ENCODE measurements at regions of chr5 and their contacts with region 1.

Region 1: DNA sequence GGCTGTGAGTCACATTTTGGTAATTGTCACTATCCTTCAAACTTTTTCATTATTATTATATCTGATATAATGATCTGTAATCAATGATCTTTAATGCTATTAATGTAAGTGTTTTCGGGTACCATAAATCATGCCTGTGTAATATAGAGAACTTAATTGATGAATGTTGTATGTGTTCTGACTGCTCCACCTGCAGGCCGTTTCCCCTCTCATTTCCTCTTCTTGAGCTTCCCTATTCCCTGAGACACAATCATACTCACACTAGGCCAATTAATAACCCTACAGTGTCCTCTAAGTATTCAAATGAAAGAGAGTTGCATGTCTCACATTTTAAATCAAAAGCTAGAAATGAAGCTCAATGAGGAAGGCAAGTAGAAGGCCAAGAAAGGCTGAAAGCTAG is 420.9 kb upstream of the SGCD start:
- DNase-seq: peak in 2 of 35 experiments; percentile 4 to 35
- ATAC-seq: no peak
- H3K4me3 ChIP-seq: no peak overlapping the region
- H3K4me3 Mint-ChIP-seq: no peak overlapping the region
- H3K27ac ChIP-seq: no peak overlapping the region
- H3K27ac Mint-ChIP-seq: no peak overlapping the region
- H3K4me1 ChIP-seq: no peaks in the 10 kb centered on the region
- H3K4me1 Mint-ChIP-seq: no peaks in the 10 kb centered on the region
- H3K27me3 ChIP-seq: no peaks in the 10 kb centered on the region
- H3K27me3 Mint-ChIP-seq: peaks cover 4 to 8% of the 10 kb centered on the region in 2 donors

Region 2: GRCh38 chr5:155700333-155700732 is 205.7 kb before region 1 on chr5:
- CTCF ChIA-PET with region 1: interaction called in 1 of 2 experiments, 15 read pairs
- POLR2A ChIA-PET with region 1: no interaction called
- DNase-seq: peak in 6 of 35 experiments; percentile 0 to 54 (median 9)
- ATAC-seq: no peak
- H3K4me3 ChIP-seq: no peak overlapping the region
- H3K4me3 Mint-ChIP-seq: no peak overlapping the region
- H3K27ac ChIP-seq: no peak overlapping the region
- H3K27ac Mint-ChIP-seq: no peak overlapping the region
- H3K4me1 ChIP-seq: no peaks in the 10 kb centered on the region
- H3K4me1 Mint-ChIP-seq: no peaks in the 10 kb centered on the region
- H3K27me3 ChIP-seq: no peaks in the 10 kb centered on the region
- H3K27me3 Mint-ChIP-seq: peaks cover 0 to 1% of the 10 kb centered on the region in 2 donors

Measured in T-cell (primary cell).